A673 (cell line): ENCODE measurements at regions of chr12 and their contacts with region 1.

Region 1: DNA sequence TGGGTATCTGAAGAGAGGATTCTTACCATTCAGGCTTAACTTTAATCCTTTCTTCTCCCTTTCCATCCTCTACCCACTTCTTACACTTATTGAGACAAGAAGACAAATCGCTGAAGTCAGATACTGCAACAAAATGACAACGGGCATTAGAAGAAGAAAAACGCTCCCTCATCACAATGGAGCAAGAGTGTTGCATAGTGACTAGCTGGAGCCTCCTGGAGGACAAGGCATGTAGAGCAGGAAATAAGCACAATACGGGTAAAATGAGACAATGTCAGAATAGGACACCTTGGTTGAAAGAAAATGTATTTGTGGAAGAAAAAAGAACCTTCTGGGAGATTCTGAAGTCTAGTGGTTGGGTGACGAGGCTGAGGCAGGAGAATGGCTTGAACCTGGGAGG is 501.0 kb downstream of the RERGL start:
- DNase-seq: peak; percentile 90
- H3K4me3 ChIP-seq: peak overlapping the region; percentile 39
- H3K27ac ChIP-seq: peak overlapping the region; percentile 84
- H3K4me1 ChIP-seq: peaks cover 49% of the 10 kb centered on the region
- H3K27me3 ChIP-seq: no peaks in the 10 kb centered on the region
- CTCF ChIP-seq: peak; percentile 81

Region 2: GRCh38 chr12:17215759-17216570 is 373.0 kb before region 1 on chr12:
- CTCF ChIA-PET with region 1: no interaction called
- POLR2A ChIA-PET with region 1: no interaction called
- intact Hi-C with region 1: loop called (anchors 5 kb)
- DNase-seq: peak; percentile 85
- H3K4me3 ChIP-seq: peak overlapping the region; percentile 19
- H3K27ac ChIP-seq: peak overlapping the region; percentile 51
- H3K4me1 ChIP-seq: peaks cover 22% of the 10 kb centered on the region
- H3K27me3 ChIP-seq: no peaks in the 10 kb centered on the region
- CTCF ChIP-seq: peak; percentile 59

Region 3: DNA sequence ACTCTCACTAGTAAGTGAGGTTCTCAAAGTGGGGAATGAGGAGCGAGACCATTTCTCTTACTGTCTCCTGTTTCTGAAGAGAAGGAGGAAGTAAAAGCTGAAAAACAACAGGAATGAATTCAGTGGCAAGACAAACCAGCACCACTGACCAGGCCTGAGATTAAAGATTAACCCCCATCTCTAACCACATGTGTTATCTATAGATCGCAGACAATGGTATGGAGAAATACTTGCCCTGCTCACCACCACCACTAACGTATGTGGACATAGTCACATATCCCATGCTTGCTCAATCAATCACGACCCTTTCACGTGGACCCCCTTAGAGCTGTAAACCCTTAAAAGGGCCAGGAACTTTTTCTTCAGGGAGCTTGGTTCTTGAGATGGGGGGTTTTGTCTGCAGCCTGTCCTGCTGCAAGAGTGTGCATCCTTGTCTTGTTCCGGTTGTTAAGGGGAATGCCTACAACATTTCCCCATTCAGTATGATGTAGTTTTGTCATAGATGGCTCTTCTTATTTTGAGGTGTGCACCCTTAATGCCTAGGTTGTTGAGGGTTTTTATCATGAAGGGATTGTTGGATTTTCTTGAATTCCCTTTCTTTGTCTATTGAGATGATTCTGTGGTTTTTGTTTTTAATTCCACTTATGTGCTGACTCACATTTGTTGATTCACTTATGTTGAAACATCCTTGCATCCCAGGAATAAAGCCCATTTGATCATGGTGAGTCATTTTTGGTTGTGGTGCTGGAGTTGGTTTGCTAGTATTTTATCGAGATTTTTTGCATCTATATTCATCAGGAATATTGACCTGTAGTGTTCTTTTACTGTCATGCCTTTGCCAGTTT is 284.2 kb before region 1 on chr12:
- CTCF ChIA-PET with region 1: no interaction called
- POLR2A ChIA-PET with region 1: no interaction called
- intact Hi-C with region 1: no loop called
- DNase-seq: peak; percentile 20
- H3K4me3 ChIP-seq: no peak overlapping the region
- H3K27ac ChIP-seq: no peak overlapping the region
- H3K4me1 ChIP-seq: no peaks in the 10 kb centered on the region
- H3K27me3 ChIP-seq: no peaks in the 10 kb centered on the region
- CTCF ChIP-seq: no peak

Region 4: GRCh38 chr12:17511369-17511768 is 77.6 kb before region 1 on chr12:
- CTCF ChIA-PET with region 1: no interaction called
- POLR2A ChIA-PET with region 1: no interaction called
- intact Hi-C with region 1: no loop called
- DNase-seq: peak; percentile 24
- H3K4me3 ChIP-seq: no peak overlapping the region
- H3K27ac ChIP-seq: no peak overlapping the region
- H3K4me1 ChIP-seq: no peaks in the 10 kb centered on the region
- H3K27me3 ChIP-seq: no peaks in the 10 kb centered on the region
- CTCF ChIP-seq: peak; percentile 46

Region 5: GRCh38 chr12:17571047-17571446 is 17.9 kb before region 1 on chr12:
- CTCF ChIA-PET with region 1: no interaction called
- POLR2A ChIA-PET with region 1: no interaction called
- intact Hi-C with region 1: no loop called
- DNase-seq: no peak
- H3K4me3 ChIP-seq: no peak overlapping the region
- H3K27ac ChIP-seq: no peak overlapping the region
- H3K4me1 ChIP-seq: peaks cover 10% of the 10 kb centered on the region
- H3K27me3 ChIP-seq: no peaks in the 10 kb centered on the region
- CTCF ChIP-seq: no peak